Aorta (tissue), 5 donors: ENCODE measurements at regions of chr2 and their contacts with region 1.

Region 1: GRCh38 chr2:20584637-20585321 is 66.1 kb downstream of the HS1BP3 start:
- DNase-seq: peak; percentile 47 to 71
- ATAC-seq: peak; percentile 63
- H3K4me3 ChIP-seq: no peak overlapping the region
- H3K27ac ChIP-seq: peak overlapping the region in 1 of 2 donors; percentile 68
- H3K4me1 ChIP-seq: no peaks in the 10 kb centered on the region
- H3K27me3 ChIP-seq: no peaks in the 10 kb centered on the region

Region 2: DNA sequence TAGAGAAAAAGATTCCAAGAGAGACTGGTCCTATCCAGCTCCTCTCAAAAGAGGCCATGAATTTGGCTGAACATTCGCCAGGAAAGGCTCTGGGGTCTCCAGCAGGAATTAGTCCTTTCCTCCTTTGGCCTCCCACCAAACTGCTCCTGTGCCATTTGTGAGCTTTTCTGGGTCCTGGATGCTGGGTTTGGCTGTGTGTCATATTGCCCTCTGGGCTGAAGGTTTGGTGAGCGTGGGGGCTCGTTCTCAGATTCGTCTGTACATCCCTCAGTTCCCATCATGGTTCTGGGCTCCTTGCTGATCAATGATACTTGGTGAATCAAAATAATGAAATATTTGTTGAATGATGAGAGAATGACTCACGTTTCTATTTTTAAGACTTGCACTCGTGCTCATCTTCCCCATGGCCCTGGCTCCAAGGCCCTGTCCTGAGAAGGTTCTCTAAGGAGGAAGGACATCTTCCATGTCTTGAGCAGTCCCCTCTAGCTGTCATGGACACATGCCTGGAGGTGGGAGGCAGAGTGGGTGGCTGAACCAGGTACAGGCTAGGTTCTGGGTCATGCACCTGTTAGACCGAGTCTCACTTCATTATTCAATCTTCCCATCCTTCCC is 185.7 kb before region 1 on chr2:
- intact Hi-C with region 1: no loop called
- DNase-seq: peak in 1 of 2 donors; percentile 19
- ATAC-seq: no peak
- H3K4me3 ChIP-seq: no peak overlapping the region
- H3K27ac ChIP-seq: no peak overlapping the region
- H3K4me1 ChIP-seq: no peaks in the 10 kb centered on the region
- H3K27me3 ChIP-seq: no peaks in the 10 kb centered on the region

Region 3: GRCh38 chr2:20635675-20636584 is 51.2 kb after region 1 on chr2:
- intact Hi-C with region 1: loop called in 1 of 2 experiments (anchors 5 kb)
- DNase-seq: peak; percentile 89 to 96
- ATAC-seq: peak; percentile 91
- H3K4me3 ChIP-seq: no peak overlapping the region
- H3K27ac ChIP-seq: peak overlapping the region; percentile 88 to 91
- H3K4me1 ChIP-seq: no peaks in the 10 kb centered on the region
- H3K27me3 ChIP-seq: no peaks in the 10 kb centered on the region

Region 4: DNA sequence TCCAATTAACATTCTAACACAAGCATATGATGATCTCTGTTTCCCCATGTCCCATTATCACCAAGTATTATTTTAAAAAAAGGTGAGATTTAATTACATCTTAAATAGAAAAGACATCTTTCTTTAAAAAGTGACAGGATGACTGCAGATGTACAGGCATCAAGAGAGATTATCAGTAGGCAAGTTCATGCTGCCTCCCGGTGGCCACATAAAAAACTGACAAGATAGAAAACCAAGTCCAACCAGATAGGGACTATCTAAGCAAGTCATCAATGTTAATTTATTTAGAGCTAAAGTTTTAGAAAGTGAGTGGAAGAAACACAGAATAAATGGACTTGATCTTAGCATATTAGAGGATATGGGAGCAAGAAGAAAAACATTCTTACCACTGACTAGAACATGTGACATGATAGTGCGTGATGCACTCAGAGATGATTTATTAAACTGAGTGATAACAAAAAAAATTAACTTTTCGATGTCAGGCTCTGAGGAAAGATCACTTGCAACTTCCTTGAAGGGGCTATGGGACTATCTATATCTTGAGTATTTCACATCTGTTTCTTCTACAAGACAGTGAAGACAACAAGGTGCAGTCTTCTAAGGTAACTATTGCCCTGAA is 533.6 kb after region 1 on chr2:
- intact Hi-C with region 1: no loop called
- DNase-seq: no peak
- ATAC-seq: no peak
- H3K4me3 ChIP-seq: no peak overlapping the region
- H3K27ac ChIP-seq: no peak overlapping the region
- H3K4me1 ChIP-seq: no peaks in the 10 kb centered on the region
- H3K27me3 ChIP-seq: no peaks in the 10 kb centered on the region